H1 (cell line): ENCODE measurements at regions of chr7 and their contacts with region 1.

Region 1: DNA sequence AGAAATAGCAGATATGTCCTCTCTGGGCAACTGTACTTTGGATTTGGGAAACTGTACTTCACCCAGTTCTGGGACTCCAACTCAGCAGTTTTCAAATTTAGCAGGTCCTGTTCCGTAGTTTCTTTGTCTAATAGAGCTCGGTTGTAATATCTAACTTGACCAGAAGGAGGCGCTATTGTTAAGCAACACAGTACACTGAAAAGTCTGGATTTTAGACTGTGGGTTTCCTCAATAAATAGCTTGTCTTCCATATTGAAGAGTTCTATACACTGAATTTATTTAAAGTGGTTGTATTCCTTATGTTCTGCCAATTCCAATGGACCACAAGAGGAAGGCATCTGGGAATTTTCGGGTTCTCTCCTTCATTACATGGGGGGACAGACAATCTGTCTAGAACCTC is 39.8 kb downstream of the ELFN1 start:
- DNase-seq: no peak
- H3K4me3 ChIP-seq: no peak overlapping the region
- H3K27ac ChIP-seq: no peak overlapping the region
- H3K4me1 ChIP-seq: peaks cover 0 to 22% (median 17%) of the 10 kb centered on the region in 4 experiments; a peak in 6 of 7 replicates
- H3K27me3 ChIP-seq: no peaks in the 10 kb centered on the region; a peak in 2 of 7 replicates
- CTCF ChIP-seq: peak in 1 of 3 experiments; percentile 36; a peak in 2 of 4 replicates
- EP300 ChIP-seq: no peak
- POLR2A ChIP-seq: no peak
- RAD21 ChIP-seq: peak in 1 of 2 experiments; percentile 39; a peak in 1 of 4 replicates

Region 2: DNA sequence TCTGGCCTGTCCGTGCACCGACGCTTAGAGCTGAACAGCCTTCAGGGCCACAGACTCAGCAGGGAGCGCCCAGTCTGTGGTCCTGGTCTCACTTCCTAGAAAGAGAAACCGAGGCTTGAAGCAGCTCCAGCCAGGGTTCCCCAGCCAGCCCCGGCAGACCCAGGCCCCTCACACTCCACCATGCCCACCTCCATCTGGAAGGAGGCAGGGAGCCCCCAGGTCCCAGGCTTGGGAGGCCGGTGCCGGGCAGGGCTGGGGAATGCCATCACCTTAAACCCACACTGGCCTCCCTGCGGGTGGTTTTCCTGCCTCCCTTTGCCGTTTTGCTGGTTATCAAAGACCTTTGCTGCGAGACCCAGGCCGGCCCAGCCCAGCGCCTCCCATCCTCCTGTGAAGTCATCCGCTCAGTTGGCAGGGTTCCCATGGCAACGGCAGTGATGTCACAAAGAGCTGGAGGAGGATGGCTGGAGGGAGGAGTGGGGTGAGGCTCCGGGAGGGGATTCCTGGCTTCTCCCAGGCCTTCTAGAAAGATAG is 15.8 kb before region 1 on chr7:
- CTCF ChIA-PET with region 1: interaction called, 21 read pairs
- POLR2A ChIA-PET with region 1: interaction called, 5 read pairs
- DNase-seq: peak in 1 of 2 experiments; percentile 88
- H3K4me3 ChIP-seq: no peak overlapping the region
- H3K27ac ChIP-seq: no peak overlapping the region
- H3K4me1 ChIP-seq: peaks cover 2 to 14% (median 11%) of the 10 kb centered on the region in 4 experiments
- H3K27me3 ChIP-seq: no peaks in the 10 kb centered on the region; a peak in 1 of 7 replicates
- CTCF ChIP-seq: no peak
- EP300 ChIP-seq: peak in 1 of 2 experiments; percentile 10; a peak in 1 of 3 replicates
- POLR2A ChIP-seq: no peak
- RAD21 ChIP-seq: no peak

Region 3: DNA sequence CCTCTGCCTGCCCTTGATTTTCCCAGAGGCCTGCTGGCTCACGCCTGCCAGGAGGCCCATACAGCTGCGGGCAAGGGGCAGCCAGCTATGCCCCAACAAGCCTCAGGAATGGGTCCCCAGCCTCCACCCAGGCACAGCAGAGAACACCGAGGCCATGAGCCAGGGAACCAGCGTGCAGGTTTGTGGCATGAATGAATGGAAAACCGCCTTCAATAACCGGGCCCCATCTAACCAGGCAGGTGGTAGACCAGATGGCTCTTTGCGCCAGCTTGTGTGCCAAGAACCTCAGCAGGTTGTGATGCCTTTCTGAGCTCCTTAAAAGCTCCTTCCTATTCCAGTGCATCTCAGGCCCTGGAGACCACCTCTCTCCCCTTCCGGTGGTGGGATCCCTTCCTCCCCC is 10.4 kb after region 1 on chr7:
- CTCF ChIA-PET with region 1: interaction called, 12 read pairs
- POLR2A ChIA-PET with region 1: no interaction called
- DNase-seq: no peak
- H3K4me3 ChIP-seq: no peak overlapping the region
- H3K27ac ChIP-seq: no peak overlapping the region
- H3K4me1 ChIP-seq: peaks cover 0 to 29% (median 21%) of the 10 kb centered on the region in 4 experiments; a peak in 6 of 7 replicates
- H3K27me3 ChIP-seq: no peaks in the 10 kb centered on the region
- CTCF ChIP-seq: no peak
- EP300 ChIP-seq: no peak
- POLR2A ChIP-seq: no peak
- RAD21 ChIP-seq: no peak

Region 4: DNA sequence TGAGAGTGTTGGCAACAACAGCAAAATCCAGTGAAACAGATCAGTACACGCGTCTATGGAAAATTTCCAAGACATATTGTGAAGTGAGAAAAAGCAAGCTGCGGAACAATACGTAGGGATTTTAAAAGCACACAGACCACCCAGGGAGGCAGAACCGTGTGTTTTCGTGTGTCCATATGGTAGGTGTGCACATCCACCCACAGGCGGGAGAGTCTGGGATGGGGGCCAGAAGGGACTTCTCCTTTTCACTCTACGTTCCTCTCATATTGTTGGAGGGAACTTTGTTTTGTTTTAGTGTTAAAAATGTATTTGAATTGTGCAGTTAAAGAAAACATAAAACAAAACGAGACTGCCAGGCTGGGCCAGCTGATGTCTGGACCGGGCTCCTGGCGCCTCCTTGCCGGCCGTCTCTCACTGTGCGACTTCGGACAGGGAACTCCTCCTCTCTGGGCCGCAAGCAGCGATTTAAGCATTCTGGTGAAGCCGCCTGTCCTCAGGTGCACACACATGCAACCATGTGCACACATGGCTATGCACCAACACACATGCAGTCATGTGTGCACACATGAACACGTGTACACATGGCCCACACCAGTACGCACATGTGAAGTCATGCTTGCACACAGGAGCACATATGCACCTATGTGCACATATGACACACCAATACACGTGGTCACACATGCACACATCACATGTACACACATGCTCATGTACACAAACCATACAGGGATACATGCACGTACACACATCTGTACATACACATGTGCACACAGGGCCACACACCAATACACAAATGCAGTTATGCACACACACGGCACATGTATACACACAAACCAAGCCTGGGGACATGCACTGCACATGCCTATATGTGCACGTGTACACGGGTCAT is 101.3 kb after region 1 on chr7:
- CTCF ChIA-PET with region 1: no interaction called
- POLR2A ChIA-PET with region 1: no interaction called
- DNase-seq: no peak
- H3K4me3 ChIP-seq: no peak overlapping the region
- H3K27ac ChIP-seq: no peak overlapping the region
- H3K4me1 ChIP-seq: peaks cover 0 to 1% (median 0%) of the 10 kb centered on the region in 4 experiments; a peak in 1 of 7 replicates
- H3K27me3 ChIP-seq: no peaks in the 10 kb centered on the region
- CTCF ChIP-seq: no peak
- EP300 ChIP-seq: no peak
- POLR2A ChIP-seq: no peak
- RAD21 ChIP-seq: no peak